OCI-LY7 (cell line): ENCODE measurements at regions of chr6 and their contacts with region 1.

Region 1: DNA sequence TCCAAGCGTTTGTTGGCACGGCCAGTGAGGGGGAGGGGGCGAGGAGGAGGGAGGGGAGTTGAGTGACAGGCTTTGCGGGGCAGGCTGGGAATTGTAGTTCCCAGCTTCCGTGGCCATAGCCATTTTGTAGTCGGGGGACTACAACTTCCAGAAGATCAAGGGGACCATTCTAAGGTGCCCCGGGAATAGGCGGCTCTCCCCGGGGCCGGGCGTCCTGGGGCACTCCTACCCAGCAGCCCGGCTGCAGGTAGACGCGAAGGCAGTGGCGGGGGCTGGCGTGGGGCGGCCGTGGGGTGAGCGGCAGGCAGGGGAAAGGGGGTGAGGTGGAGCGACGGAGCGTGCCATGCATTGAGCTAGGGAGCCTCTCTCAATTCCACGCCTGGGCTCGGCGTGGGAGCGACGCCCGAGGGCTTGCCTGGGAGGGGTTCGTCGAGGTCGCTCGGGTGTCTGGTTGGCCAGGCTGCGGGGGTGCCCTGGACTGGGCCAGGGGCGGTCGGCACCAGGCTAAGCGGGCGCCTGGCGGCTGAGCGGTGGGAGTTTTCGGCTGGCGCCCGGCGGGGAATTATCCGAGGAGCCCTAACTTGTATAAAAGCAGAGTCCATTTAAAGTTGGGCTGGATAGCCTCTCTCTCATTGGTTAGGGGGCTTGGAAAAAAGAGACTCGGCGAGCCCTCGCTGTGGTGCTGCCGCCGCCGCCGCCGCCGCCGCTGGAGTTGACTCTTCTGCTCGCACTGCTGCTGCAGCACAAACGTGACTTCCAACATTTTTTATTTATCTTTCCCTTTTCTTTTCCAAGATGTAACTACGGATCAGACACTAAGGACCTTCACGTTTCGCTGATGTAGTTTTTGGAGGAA is at the start of gene JARID2:
- DNase-seq: peak; percentile 95
- H3K4me3 ChIP-seq: peak within 1 kb of the TSS; percentile 80
- H3K27ac ChIP-seq: peak within 1 kb of the TSS; percentile 55
- H3K4me1 ChIP-seq: peaks cover 27% of the 10 kb centered on the region
- CTCF ChIP-seq: no peak
- total RNA-seq, gene JARID2: 18.4 and 19.0 TPM in 2 replicates

Region 2: GRCh38 chr6:14660806-14661579 is 584.6 kb before region 1 on chr6:
- CTCF ChIA-PET with region 1: no interaction called
- POLR2A ChIA-PET with region 1: interaction called, 3 read pairs
- intact Hi-C with region 1: loop called (anchors 5 kb)
- DNase-seq: peak; percentile 79
- H3K4me3 ChIP-seq: peak overlapping the region; percentile 48
- H3K27ac ChIP-seq: peak overlapping the region; percentile 59
- H3K4me1 ChIP-seq: peaks cover 93% of the 10 kb centered on the region
- CTCF ChIP-seq: no peak

Region 3: DNA sequence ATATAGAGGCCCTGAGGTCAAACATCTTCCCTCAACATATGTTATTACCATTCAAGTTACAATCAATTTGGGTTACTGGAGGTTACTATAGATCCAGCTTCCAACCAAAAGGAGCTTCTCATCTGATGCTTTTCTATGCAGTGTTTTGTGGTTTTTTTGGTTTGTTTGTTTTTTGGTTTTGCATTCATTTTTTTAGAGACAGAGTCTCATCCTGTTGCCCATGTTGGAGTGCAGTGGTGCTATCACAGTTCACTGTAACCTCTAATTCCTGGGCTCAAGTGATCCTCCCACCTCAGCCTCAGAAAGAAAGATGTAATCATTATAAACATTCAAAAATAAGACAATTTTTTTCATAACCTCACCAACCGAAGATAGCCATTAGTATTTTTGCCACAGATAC is 124.1 kb before region 1 on chr6:
- CTCF ChIA-PET with region 1: no interaction called
- POLR2A ChIA-PET with region 1: interaction called, 10 read pairs
- intact Hi-C with region 1: no loop called
- DNase-seq: no peak
- H3K4me3 ChIP-seq: no peak overlapping the region
- H3K27ac ChIP-seq: no peak overlapping the region
- H3K4me1 ChIP-seq: no peaks in the 10 kb centered on the region
- CTCF ChIP-seq: no peak

Region 4: DNA sequence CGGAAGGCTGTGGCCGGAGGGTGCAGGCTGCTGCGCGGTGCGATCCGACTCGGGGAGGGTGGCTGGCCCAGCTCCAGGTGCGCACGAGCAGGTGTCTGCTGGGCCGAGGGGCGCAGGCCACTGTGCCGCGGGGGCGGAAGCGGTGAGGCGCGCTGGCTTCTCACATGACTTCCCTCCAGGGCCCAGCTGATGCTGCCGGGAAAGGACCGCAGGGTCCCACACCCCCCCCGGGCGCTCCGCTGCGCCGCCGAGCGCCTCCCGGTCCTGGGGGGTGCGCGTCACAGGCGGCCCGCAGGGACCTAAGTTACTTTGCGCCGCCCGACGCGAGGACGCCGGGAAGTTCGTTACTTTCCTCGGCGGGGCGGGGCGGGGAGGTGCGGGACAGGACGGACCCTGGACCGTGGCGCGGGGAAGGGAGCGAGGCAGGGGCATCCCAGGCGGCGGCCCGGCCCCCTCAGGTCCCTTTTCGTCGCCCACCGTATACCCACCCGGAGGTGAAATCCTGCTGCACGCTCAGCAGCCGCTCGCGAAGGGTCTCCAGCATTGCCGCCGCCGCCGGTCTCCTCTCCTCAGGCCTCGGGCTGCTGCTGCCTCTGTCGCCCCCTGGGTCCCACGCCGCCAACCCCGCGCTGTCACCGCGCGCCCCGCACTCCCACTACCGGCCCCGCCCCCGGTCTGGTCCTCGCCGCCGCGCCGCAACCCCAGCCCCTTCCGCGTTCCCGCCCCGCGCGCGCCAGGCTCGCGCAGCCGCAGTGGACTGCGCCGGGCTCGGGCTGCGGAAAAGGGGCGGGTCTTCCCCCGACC is 416.9 kb after region 1 on chr6 and contains the start of gene DTNBP1:
- CTCF ChIA-PET with region 1: no interaction called
- POLR2A ChIA-PET with region 1: no interaction called
- intact Hi-C with region 1: loop called (anchors 5 kb)
- DNase-seq: peak; percentile 88
- H3K4me3 ChIP-seq: peak within 1 kb of the TSS; percentile 75
- H3K27ac ChIP-seq: peak within 1 kb of the TSS; percentile 48
- H3K4me1 ChIP-seq: peaks cover 39% of the 10 kb centered on the region
- CTCF ChIP-seq: no peak
- total RNA-seq, gene DTNBP1: 9.8 and 10.9 TPM in 2 replicates

Region 5: DNA sequence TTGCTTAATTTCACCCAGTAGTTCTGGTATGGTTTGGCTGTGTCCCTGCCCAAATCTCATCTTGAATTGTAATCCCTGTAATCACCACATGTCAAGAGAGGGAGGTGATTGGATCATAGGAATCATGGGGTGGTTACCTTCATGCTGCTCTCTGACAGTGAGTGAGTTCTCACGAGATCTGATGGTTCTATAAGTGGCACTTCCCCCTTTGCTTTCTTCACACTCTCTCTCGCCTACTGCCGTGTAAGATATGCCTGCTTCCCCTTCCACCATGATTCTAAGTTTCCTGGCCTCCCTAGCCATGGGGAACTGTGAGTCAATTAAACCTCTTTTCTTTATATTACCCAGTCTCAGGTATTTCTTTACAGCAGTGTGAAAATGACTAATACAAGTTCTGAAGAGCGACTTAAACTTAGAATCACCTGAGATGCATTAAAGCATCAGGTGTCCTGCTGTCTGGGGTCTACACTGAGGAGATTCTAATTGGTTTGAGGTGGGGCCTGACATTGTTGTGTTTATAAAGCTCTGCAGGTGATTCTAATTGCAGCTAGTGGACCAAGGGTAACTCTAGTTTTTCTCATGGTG is 499.3 kb after region 1 on chr6:
- CTCF ChIA-PET with region 1: no interaction called
- POLR2A ChIA-PET with region 1: no interaction called
- intact Hi-C with region 1: no loop called
- DNase-seq: peak; percentile 14
- H3K4me3 ChIP-seq: no peak overlapping the region
- H3K27ac ChIP-seq: no peak overlapping the region
- H3K4me1 ChIP-seq: no peaks in the 10 kb centered on the region
- CTCF ChIP-seq: no peak